ENCODE measurements at regions of chr9 and their contacts with region 1.

Region 1: DNA sequence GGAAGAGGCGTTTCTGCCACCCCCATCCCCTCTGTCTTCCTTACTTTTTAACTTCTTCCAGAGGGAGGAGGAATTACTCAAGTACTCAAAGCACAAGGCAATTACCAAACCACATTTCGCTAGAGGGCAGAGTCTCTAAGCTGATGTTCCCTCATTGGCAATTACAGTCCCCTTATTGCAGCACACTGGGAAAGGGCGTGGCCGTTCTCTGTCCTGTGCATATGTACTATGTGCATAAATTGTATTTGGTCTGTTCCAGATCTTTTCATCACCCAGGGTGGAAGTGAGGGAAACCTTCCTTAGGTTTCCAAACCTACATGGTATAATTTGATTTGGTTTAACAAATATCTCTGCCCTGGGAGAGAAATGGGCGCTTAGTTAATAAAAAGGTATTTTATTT is 29.8 kb upstream of the ALDOB start:
- DNase-seq: no peak
- H3K4me3 ChIP-seq: no peak overlapping the region
- CTCF ChIP-seq: peak; percentile 45

Region 2: GRCh38 chr9:101242651-101243050 is 222.7 kb before region 1 on chr9:
- in situ Hi-C with region 1: no loop called
- DNase-seq: no peak
- H3K4me3 ChIP-seq: no peak overlapping the region
- CTCF ChIP-seq: no peak

Region 3: GRCh38 chr9:101530077-101530711 is 64.8 kb after region 1 on chr9:
- in situ Hi-C with region 1: loop called (anchors 5 kb)
- DNase-seq: peak; percentile 67
- H3K4me3 ChIP-seq: no peak overlapping the region
- CTCF ChIP-seq: peak; percentile 82

Measured in astrocyte of the cerebellum (primary cell).